A673 (cell line): ENCODE measurements at regions of chr22 and their contacts with region 1.

Region 1: GRCh38 chr22:24685531-24686190 is 82.7 kb downstream of the GGT1 start:
- DNase-seq: no peak
- H3K4me3 ChIP-seq: peak overlapping the region; percentile 25
- H3K27ac ChIP-seq: no peak overlapping the region
- H3K4me1 ChIP-seq: peaks cover 4% of the 10 kb centered on the region
- H3K27me3 ChIP-seq: peaks cover 8% of the 10 kb centered on the region
- CTCF ChIP-seq: no peak

Region 2: DNA sequence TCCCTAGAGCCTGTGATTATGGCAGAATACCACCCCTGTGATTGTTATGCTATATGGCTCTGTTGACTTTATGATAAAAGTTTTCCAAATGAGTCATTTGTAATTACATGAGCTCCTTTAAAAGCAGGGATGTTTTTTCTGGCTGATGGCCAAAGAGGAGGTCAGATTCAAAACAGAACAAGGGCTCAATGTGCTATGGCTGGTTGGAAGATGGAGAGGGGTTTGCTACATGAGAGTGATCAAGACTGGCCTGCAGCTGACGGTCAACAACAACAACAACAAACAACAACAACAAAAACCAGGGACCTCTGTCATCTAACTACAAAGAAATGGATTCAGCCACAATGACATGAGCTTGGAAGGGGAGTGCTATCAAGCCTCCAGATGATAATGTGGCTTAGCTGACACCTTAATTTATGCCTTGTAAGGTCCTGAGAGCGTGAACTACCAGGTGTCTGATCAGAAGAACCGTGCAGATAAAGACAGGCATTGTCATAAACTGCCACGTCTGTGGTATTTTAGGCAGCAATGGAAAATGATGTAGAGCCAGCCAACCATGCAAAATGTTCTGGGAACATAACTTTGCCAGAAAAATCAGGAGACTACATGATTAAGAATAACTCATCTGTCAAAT is 41.7 kb after region 1 on chr22:
- CTCF ChIA-PET with region 1: no interaction called
- POLR2A ChIA-PET with region 1: no interaction called
- intact Hi-C with region 1: loop called (anchors 5 kb)
- DNase-seq: peak; percentile 50
- H3K4me3 ChIP-seq: no peak overlapping the region
- H3K27ac ChIP-seq: no peak overlapping the region
- H3K4me1 ChIP-seq: no peaks in the 10 kb centered on the region
- H3K27me3 ChIP-seq: no peaks in the 10 kb centered on the region
- CTCF ChIP-seq: no peak

Region 3: DNA sequence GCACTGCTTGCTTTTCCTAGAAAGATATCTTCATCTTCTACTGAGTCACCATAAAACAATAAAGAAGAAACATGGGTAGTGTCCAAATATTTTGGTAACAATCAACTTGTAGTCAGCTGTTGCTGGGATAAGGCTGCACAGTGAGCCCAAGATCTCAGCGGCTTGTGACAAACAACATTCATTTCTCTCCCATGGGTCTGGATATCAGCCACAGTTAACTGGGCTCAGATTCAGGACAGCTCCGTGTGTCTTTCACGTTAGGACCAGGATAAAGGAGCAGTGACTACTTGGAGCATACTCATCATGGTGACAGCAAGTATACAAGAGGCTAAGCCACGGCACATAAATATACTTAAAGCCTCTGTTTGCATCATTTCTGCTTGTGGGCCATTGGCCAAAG is 850.9 kb after region 1 on chr22:
- CTCF ChIA-PET with region 1: no interaction called
- POLR2A ChIA-PET with region 1: interaction called, 11 read pairs
- intact Hi-C with region 1: no loop called
- DNase-seq: no peak
- H3K4me3 ChIP-seq: no peak overlapping the region
- H3K27ac ChIP-seq: no peak overlapping the region
- H3K4me1 ChIP-seq: no peaks in the 10 kb centered on the region
- H3K27me3 ChIP-seq: no peaks in the 10 kb centered on the region
- CTCF ChIP-seq: no peak